Common myeloid progenitor, CD34-positive (primary cell): ENCODE measurements at regions of chr4 and their contacts with region 1.

Region 1: GRCh38 chr4:122914292-122914904 is 8.0 kb downstream of the NUDT6 start:
- DNase-seq: peak; percentile 28 to 49 (median 33)
- H3K4me3 ChIP-seq: no peak overlapping the region
- H3K27ac ChIP-seq: no peak overlapping the region
- H3K4me1 ChIP-seq: no peaks in the 10 kb centered on the region
- H3K27me3 ChIP-seq: no peaks in the 10 kb centered on the region

Region 2: GRCh38 chr4:122602277-122603142 is 311.9 kb before region 1 on chr4:
- CTCF ChIA-PET with region 1: interaction called, 17 read pairs
- POLR2A ChIA-PET with region 1: no interaction called
- DNase-seq: peak; percentile 34 to 52 (median 46)
- H3K4me3 ChIP-seq: no peak overlapping the region
- H3K27ac ChIP-seq: no peak overlapping the region
- H3K4me1 ChIP-seq: no peaks in the 10 kb centered on the region
- H3K27me3 ChIP-seq: peaks cover 0 to 68% (median 29%) of the 10 kb centered on the region in 5 experiments

Region 3: GRCh38 chr4:122758033-122758432 is 156.4 kb before region 1 on chr4:
- CTCF ChIA-PET with region 1: interaction called, 18 read pairs
- POLR2A ChIA-PET with region 1: no interaction called
- DNase-seq: peak; percentile 22 to 60 (median 39)
- H3K4me3 ChIP-seq: no peak overlapping the region
- H3K27ac ChIP-seq: no peak overlapping the region
- H3K4me1 ChIP-seq: peaks cover 5 to 10% (median 6%) of the 10 kb centered on the region in 4 experiments
- H3K27me3 ChIP-seq: no peaks in the 10 kb centered on the region

Region 4: GRCh38 chr4:122855353-122855890 is 59.0 kb before region 1 on chr4:
- CTCF ChIA-PET with region 1: no interaction called
- POLR2A ChIA-PET with region 1: no interaction called
- DNase-seq: no peak
- H3K4me3 ChIP-seq: no peak overlapping the region
- H3K27ac ChIP-seq: no peak overlapping the region
- H3K4me1 ChIP-seq: no peaks in the 10 kb centered on the region
- H3K27me3 ChIP-seq: no peaks in the 10 kb centered on the region

Region 5: DNA sequence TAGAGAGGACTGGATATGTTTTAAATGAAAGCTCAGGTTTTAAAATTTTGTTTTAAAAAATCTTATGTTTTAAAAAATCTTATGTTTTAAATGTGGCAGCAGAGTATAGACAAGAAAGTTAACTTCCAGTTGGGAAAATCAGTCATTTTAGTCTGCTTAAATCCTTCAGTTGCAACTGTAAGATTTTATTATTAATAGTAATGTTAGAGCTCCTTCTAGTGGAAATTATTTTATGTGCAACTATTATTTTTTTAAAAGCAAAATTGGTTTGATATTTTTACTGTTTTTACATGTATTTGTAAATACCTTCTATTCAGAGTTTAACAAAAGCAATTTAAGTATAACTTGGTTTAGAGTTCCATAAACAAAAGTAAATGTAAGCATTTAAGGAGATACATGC is 16.5 kb after region 1 on chr4:
- CTCF ChIA-PET with region 1: interaction called, 27 read pairs
- POLR2A ChIA-PET with region 1: no interaction called
- DNase-seq: peak in 2 of 3 donors; percentile 21 to 41
- H3K4me3 ChIP-seq: no peak overlapping the region
- H3K27ac ChIP-seq: no peak overlapping the region
- H3K4me1 ChIP-seq: no peaks in the 10 kb centered on the region
- H3K27me3 ChIP-seq: no peaks in the 10 kb centered on the region